GM10248 (cell line): ENCODE measurements at regions of chr12 and their contacts with region 1.

Region 1: DNA sequence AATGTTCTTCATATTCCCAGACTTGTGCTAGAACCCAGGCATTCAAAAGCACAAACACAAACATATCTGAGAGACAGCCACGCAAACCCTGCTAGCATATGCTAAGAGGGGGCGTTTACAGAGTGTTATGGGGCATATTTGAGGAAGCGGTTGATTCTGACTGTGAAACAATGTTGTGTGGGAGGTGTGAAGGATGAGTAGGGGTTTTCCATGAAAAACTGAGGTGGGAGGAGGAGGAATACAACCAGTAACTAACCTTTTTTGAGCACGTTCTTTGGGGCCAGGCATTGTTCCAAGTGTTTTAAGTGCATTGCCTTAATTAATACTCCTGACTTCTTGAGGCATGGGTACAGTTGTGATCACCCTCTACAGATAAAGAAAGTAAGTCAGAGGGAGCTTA is 499.5 kb downstream of the AACS start:
- DNase-seq: no peak
- CTCF ChIP-seq: no peak

Region 2: GRCh38 chr12:125552295-125552694 is 12.5 kb before region 1 on chr12:
- CTCF ChIA-PET with region 1: interaction called, 10 read pairs
- POLR2A ChIA-PET with region 1: no interaction called
- DNase-seq: no peak
- CTCF ChIP-seq: no peak

Region 3: GRCh38 chr12:125683748-125684381 is 119.1 kb after region 1 on chr12:
- CTCF ChIA-PET with region 1: no interaction called
- POLR2A ChIA-PET with region 1: no interaction called
- DNase-seq: peak; percentile 58
- CTCF ChIP-seq: peak; percentile 45